ENCODE measurements at regions of chr3 and their contacts with region 1.

Region 1: GRCh38 chr3:43105596-43106292 is at the start of gene POMGNT2:
- DNase-seq: peak; percentile 75 to 94 (median 87)
- ATAC-seq: peak; percentile 93
- H3K4me3 ChIP-seq: peak within 1 kb of the TSS; percentile 67 to 75
- H3K4me3 Mint-ChIP-seq: peak within 1 kb of the TSS; percentile 87
- H3K27ac ChIP-seq: peak within 1 kb of the TSS in 1 of 2 experiments; percentile 50
- H3K27ac Mint-ChIP-seq: peak within 1 kb of the TSS; percentile 74
- H3K4me1 ChIP-seq: peaks cover 15% of the 10 kb centered on the region
- H3K4me1 Mint-ChIP-seq: peaks cover 30% of the 10 kb centered on the region
- H3K27me3 ChIP-seq: no peaks in the 10 kb centered on the region
- H3K27me3 Mint-ChIP-seq: no peaks in the 10 kb centered on the region
- CTCF ChIP-seq: no peak
- total RNA-seq, gene POMGNT2: 9.8 to 11.0 TPM

Region 2: DNA sequence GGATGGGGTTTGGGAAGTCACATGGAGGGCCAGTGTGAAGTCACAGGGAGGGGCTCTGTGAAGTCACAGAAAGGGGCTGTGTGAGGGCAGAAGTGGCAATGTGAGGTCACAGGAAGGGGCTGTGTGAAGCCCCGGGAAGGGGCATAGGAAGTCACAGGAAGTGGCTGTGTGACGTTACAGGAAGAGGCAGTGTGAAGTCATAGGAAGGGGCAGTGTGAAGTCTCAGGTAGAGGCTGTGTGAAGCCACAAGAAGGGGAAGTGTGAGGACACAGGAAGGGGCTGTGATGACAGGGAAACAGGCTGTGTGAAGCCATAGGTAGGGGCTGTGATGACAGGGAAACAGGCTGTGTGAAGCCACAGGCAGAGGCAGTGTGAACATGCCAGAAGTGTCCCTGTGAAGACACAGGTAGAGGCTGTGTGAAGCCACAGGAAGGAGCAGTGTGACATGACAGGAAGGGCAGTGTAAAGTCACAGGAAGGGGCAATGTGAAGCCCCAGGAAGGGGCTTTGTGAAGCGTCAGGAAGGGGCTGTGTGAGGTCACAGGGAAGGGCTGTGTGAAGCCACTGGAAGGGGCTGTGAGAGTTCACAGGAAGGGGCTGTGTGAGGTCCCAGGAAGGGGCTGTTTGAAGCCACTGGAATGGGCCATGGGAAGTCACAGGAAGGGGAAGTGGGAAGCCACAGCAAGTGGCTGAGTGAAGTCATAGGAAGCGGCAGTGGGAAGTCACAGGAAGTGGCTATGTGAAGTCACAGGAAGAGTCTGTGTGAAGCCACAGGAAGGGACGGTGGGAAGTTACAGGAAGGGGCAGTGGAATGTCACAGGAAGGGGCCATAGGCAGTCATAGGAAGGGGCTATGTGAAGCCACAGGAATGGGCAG is 89.5 kb before region 1 on chr3:
- CTCF ChIA-PET with region 1: no interaction called
- POLR2A ChIA-PET with region 1: no interaction called
- intact Hi-C with region 1: loop called (anchors 5 kb)
- DNase-seq: peak in 3 of 9 experiments; percentile 50 to 73 (median 63)
- ATAC-seq: peak; percentile 22
- H3K4me3 ChIP-seq: no peak overlapping the region
- H3K4me3 Mint-ChIP-seq: no peak overlapping the region
- H3K27ac ChIP-seq: peak overlapping the region; percentile 63 to 95
- H3K27ac Mint-ChIP-seq: no peak overlapping the region
- H3K4me1 ChIP-seq: peaks cover 45% of the 10 kb centered on the region
- H3K4me1 Mint-ChIP-seq: peaks cover 26% of the 10 kb centered on the region
- H3K27me3 ChIP-seq: no peaks in the 10 kb centered on the region
- H3K27me3 Mint-ChIP-seq: no peaks in the 10 kb centered on the region
- CTCF ChIP-seq: no peak

Region 3: GRCh38 chr3:43024181-43024885 is 81.4 kb before region 1 on chr3:
- CTCF ChIA-PET with region 1: no interaction called
- POLR2A ChIA-PET with region 1: no interaction called
- intact Hi-C with region 1: loop called (anchors 5 kb)
- DNase-seq: peak in 7 of 9 experiments; percentile 39 to 82 (median 72)
- ATAC-seq: peak; percentile 91
- H3K4me3 ChIP-seq: peak overlapping the region; percentile 0 to 20
- H3K4me3 Mint-ChIP-seq: peak overlapping the region; percentile 74
- H3K27ac ChIP-seq: peak overlapping the region; percentile 25 to 56
- H3K27ac Mint-ChIP-seq: peak overlapping the region; percentile 95
- H3K4me1 ChIP-seq: peaks cover 69% of the 10 kb centered on the region
- H3K4me1 Mint-ChIP-seq: peaks cover 79% of the 10 kb centered on the region
- H3K27me3 ChIP-seq: no peaks in the 10 kb centered on the region
- H3K27me3 Mint-ChIP-seq: no peaks in the 10 kb centered on the region
- CTCF ChIP-seq: no peak

Region 4: GRCh38 chr3:43155464-43156121 is 49.8 kb after region 1 on chr3:
- CTCF ChIA-PET with region 1: no interaction called
- POLR2A ChIA-PET with region 1: no interaction called
- intact Hi-C with region 1: no loop called
- DNase-seq: no peak
- ATAC-seq: no peak
- H3K4me3 ChIP-seq: no peak overlapping the region
- H3K4me3 Mint-ChIP-seq: peak overlapping the region; percentile 0
- H3K27ac ChIP-seq: no peak overlapping the region
- H3K27ac Mint-ChIP-seq: peak overlapping the region; percentile 83
- H3K4me1 ChIP-seq: peaks cover 15% of the 10 kb centered on the region
- H3K4me1 Mint-ChIP-seq: peaks cover 36% of the 10 kb centered on the region
- H3K27me3 ChIP-seq: no peaks in the 10 kb centered on the region
- H3K27me3 Mint-ChIP-seq: peaks cover 2% of the 10 kb centered on the region
- CTCF ChIP-seq: no peak

Region 5: GRCh38 chr3:43286115-43286840 is 180.5 kb after region 1 on chr3 and contains the start of gene SNRK:
- CTCF ChIA-PET with region 1: no interaction called
- POLR2A ChIA-PET with region 1: no interaction called
- intact Hi-C with region 1: loop called (anchors 5 to 10 kb)
- DNase-seq: peak; percentile 86 to 99 (median 93)
- ATAC-seq: peak; percentile 84
- H3K4me3 ChIP-seq: peak within 1 kb of the TSS; percentile 76 to 82
- H3K4me3 Mint-ChIP-seq: peak within 1 kb of the TSS; percentile 99
- H3K27ac ChIP-seq: peak within 1 kb of the TSS; percentile 87 to 91
- H3K27ac Mint-ChIP-seq: peak within 1 kb of the TSS; percentile 100
- H3K4me1 ChIP-seq: peaks cover 27% of the 10 kb centered on the region
- H3K4me1 Mint-ChIP-seq: peaks cover 31% of the 10 kb centered on the region
- H3K27me3 ChIP-seq: no peaks in the 10 kb centered on the region
- H3K27me3 Mint-ChIP-seq: no peaks in the 10 kb centered on the region
- CTCF ChIP-seq: peak; percentile 48
- total RNA-seq, gene SNRK: 280 to 281 TPM

Region 6: DNA sequence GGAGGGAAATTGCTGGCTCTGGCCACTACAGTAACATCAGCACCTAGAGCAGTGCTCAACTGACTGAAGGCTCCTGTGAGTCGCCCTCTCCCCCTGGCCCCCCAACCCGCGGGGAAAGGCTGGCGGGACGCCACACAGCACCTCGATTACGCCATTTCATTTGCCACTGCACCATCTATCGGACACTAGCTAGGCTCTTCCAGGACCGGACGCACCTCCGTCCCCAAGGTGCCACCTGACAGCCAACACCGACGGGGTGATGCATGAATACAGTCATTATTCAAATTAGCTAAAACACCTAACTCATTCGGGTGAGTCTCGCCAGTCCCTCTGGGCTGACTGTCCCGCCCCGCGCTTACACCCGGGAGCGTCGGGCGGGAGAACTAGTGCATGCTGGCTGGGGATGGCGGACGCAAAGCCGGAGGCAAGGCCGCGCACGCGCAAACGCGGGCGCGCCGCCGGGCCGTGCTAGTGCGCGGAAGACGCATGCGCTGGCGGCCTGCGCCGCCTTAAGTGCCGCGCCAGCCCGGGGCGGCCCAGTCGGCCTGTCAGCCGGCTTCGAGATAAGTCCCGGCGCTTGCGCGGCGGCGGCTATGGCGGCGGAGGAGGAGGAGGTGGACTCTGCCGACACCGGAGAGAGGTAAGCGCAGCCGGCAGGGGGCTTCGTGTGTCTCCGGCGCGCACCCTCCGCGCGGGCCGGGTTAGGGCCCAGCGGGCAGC is 584.8 kb after region 1 on chr3 and contains the start of gene ABHD5:
- CTCF ChIA-PET with region 1: no interaction called
- POLR2A ChIA-PET with region 1: no interaction called
- intact Hi-C with region 1: loop called (anchors 5 to 10 kb)
- DNase-seq: peak; percentile 93 to 99 (median 96)
- ATAC-seq: peak; percentile 90
- H3K4me3 ChIP-seq: peak within 1 kb of the TSS; percentile 72 to 77
- H3K4me3 Mint-ChIP-seq: peak within 1 kb of the TSS; percentile 91
- H3K27ac ChIP-seq: peak within 1 kb of the TSS; percentile 62 to 83
- H3K27ac Mint-ChIP-seq: peak within 1 kb of the TSS; percentile 91
- H3K4me1 ChIP-seq: peaks cover 15% of the 10 kb centered on the region
- H3K4me1 Mint-ChIP-seq: peaks cover 32% of the 10 kb centered on the region
- H3K27me3 ChIP-seq: no peaks in the 10 kb centered on the region
- H3K27me3 Mint-ChIP-seq: no peaks in the 10 kb centered on the region
- CTCF ChIP-seq: peak; percentile 44
- total RNA-seq, gene ABHD5: 10.3 to 11.4 TPM

Region 7: DNA sequence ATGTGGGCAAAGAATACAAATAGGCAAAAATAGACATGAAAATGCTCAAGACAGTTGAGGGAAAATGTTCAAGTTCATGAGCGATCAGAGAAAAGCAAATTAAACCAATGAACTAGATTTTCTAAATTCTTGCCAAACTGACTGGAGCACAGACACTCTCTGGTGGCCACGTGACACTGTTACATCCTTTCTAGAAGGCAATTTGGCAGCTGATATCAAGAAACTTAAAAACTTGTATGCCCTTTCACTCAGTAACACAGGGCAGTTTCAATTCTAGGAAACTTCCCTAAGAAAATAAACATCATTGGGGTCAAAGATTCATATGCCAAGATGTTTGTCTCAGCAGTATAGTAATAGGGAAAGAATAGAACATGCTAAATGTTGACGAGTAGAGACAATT is 637.2 kb after region 1 on chr3:
- CTCF ChIA-PET with region 1: no interaction called
- POLR2A ChIA-PET with region 1: no interaction called
- intact Hi-C with region 1: no loop called
- DNase-seq: no peak
- ATAC-seq: no peak
- H3K4me3 ChIP-seq: no peak overlapping the region
- H3K4me3 Mint-ChIP-seq: no peak overlapping the region
- H3K27ac ChIP-seq: no peak overlapping the region
- H3K27ac Mint-ChIP-seq: no peak overlapping the region
- H3K4me1 ChIP-seq: no peaks in the 10 kb centered on the region
- H3K4me1 Mint-ChIP-seq: no peaks in the 10 kb centered on the region
- H3K27me3 ChIP-seq: no peaks in the 10 kb centered on the region
- H3K27me3 Mint-ChIP-seq: peaks cover 3% of the 10 kb centered on the region
- CTCF ChIP-seq: no peak

Region 8: GRCh38 chr3:44338010-44338827 is 1232.5 kb after region 1 on chr3 and contains the start of gene TCAIM:
- CTCF ChIA-PET with region 1: no interaction called
- POLR2A ChIA-PET with region 1: no interaction called
- intact Hi-C with region 1: loop called in 1 of 2 experiments (anchors 2 kb)
- DNase-seq: peak; percentile 97 to 100 (median 99)
- ATAC-seq: peak; percentile 92
- H3K4me3 ChIP-seq: peak within 1 kb of the TSS; percentile 76 to 91
- H3K4me3 Mint-ChIP-seq: peak within 1 kb of the TSS; percentile 93
- H3K27ac ChIP-seq: peak within 1 kb of the TSS; percentile 88 to 93
- H3K27ac Mint-ChIP-seq: peak within 1 kb of the TSS; percentile 97
- H3K4me1 ChIP-seq: peaks cover 15% of the 10 kb centered on the region
- H3K4me1 Mint-ChIP-seq: peaks cover 32% of the 10 kb centered on the region
- H3K27me3 ChIP-seq: no peaks in the 10 kb centered on the region
- H3K27me3 Mint-ChIP-seq: peaks cover 6% of the 10 kb centered on the region
- CTCF ChIP-seq: no peak
- total RNA-seq, gene TCAIM: 3.1 to 3.7 TPM

Region 9: DNA sequence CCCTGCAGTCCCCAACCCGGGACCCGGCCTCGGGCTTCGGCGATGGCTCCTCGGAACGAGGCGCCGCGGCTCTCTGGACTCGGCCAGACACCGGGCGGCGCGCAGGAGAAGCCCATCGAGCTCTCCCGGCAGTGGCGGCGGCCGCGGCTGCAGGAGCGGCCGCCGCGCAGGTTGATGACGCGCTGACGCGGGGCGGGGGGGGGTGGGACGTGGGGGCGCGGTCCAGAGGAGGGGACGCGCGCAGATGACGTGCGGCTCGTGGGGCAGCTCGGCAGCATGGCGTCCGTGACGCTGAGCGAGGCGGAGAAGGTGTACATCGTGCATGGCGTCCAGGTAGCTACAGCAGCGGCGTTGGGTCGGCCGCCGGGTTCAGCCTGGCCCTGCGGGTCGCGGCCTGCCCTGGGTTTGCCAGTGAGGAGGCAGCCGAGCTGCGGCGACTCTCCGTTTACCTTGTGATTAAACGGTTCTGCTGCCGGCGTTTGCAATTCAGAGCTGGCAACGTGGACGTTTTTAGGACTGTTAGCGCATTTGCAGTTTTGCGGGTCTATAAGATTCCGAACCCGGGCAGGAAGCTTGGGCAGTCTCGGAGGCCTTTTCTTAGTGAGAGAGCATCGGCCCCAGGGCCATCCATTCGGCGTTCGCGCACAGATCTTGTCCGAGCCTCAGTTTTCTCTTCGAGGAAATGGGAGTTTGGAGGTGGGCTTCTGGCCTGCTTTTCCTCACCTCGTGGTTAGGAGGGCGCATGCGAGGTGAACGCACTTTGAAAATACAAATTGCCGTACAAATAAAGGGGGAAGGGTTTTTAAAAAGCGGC is 1870.5 kb after region 1 on chr3 and contains the starts of genes EXOSC7 and ZDHHC3:
- CTCF ChIA-PET with region 1: no interaction called
- POLR2A ChIA-PET with region 1: no interaction called
- intact Hi-C with region 1: loop called in 1 of 2 experiments (anchors 10 kb)
- DNase-seq: peak; percentile 75 to 95 (median 86)
- ATAC-seq: peak; percentile 97
- H3K4me3 ChIP-seq: peak within 1 kb of the TSS; percentile 97 to 99
- H3K4me3 Mint-ChIP-seq: peak within 1 kb of the TSS; percentile 93
- H3K27ac ChIP-seq: peak within 1 kb of the TSS; percentile 90 to 94
- H3K27ac Mint-ChIP-seq: peak within 1 kb of the TSS; percentile 95
- H3K4me1 ChIP-seq: peaks cover 37% of the 10 kb centered on the region
- H3K4me1 Mint-ChIP-seq: peaks cover 65% of the 10 kb centered on the region
- H3K27me3 ChIP-seq: no peaks in the 10 kb centered on the region
- H3K27me3 Mint-ChIP-seq: no peaks in the 10 kb centered on the region
- CTCF ChIP-seq: no peak
- total RNA-seq, gene EXOSC7: 35.2 to 39.3 TPM
- total RNA-seq, gene ZDHHC3: 42.2 to 42.4 TPM